ENCODE measurements at regions of chr11 and their contacts with region 1.

Region 1: DNA sequence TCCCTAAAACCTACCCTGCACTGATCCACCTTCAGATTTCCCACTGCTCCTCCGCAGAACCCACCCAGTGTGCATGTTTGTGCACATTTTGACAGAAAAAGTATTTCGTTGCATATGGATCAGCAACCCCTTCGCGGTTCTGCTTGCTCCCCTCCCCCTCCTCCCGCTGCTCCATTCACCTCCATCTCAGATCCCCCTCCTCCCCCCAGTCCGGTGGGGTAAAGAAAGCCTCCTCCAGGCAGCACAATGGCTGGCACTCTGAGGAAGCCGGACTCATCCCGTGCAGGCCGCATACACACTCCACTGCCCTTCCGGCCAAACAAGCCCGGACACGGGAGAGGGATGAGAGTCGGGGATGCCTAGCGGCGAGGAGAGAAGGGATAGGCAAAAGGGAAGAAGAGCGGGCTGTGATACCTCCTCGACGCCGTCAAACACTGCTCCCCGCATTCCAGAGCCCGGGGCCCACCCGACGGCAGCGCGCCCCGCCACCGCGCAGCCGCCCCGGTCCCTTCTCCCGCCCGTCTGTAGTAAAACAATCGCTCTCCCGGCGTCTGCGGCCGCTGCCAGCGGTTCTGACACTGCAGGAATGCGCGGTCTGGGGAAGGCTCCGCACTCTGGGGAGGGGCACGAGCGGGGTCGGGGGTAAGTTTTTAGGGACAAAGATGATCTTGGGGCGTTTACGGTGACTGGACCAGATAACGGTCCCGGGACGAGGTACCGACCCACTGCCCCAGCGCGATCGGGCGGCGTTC is 915 bp downstream of the FEZ1 start:
- DNase-seq: peak; percentile 55 to 81 (median 78)
- ATAC-seq: peak; percentile 79 to 81
- H3K4me3 ChIP-seq: peak overlapping the region; percentile 81
- H3K27ac ChIP-seq: peak overlapping the region; percentile 32
- H3K4me1 ChIP-seq: peaks cover 3% of the 10 kb centered on the region
- H3K27me3 ChIP-seq: no peaks in the 10 kb centered on the region

Region 2: GRCh38 chr11:125364121-125364826 is 130.9 kb before region 1 on chr11:
- intact Hi-C with region 1: no loop called
- DNase-seq: no peak
- ATAC-seq: no peak
- H3K4me3 ChIP-seq: no peak overlapping the region
- H3K27ac ChIP-seq: no peak overlapping the region
- H3K4me1 ChIP-seq: no peaks in the 10 kb centered on the region
- H3K27me3 ChIP-seq: no peaks in the 10 kb centered on the region

Region 3: DNA sequence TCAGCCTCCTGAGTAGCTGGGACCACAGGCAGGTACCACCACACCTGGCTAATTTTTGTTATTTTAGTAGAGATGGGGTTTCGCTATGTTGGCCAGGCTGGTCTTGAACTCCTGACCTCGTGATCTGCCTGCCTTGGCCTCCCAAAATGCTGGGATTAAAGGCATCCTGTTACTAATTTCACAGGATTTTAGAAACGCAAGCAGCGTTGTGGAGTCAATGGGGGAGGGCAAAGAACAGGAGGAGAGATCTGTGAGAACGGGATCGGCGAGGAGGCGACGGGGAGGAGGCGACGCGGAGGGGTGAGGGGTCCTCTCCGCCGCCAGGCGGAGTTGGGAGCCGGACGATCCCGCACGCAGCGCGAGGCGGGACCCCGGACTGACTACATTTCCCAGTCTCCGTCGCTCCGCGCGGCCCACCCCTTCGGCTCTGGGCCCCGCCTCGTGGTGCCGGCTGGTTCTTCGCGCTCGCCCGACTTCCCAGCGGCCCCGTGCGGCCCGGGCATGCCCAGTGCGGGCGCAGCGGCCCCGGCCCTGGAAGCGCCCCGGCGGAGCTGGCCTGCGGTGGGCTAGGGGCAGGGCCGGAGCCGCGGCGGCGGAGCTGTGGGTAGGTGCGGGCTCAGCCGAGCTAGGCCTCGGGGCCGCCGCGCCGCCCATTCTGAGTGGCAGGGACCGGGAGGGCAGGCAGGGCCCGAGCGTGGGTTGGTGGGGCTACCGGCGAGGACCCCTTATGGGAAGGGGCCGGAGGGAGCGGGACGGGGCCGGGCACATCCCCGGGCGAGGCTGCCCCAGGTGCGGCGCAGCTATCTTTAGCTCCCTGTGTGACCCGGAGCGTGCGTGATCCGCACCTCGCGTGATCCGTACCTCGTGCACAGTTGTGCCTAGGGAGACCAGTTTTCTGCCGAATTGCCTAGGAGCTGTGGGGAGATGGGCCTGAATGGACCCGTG is 74.1 kb after region 1 on chr11 and contains the start of gene EI24:
- intact Hi-C with region 1: loop called in 1 of 4 experiments (anchors 10 kb)
- DNase-seq: peak; percentile 94 to 98 (median 97)
- ATAC-seq: peak; percentile 100
- H3K4me3 ChIP-seq: peak within 1 kb of the TSS; percentile 88
- H3K27ac ChIP-seq: peak within 1 kb of the TSS; percentile 41
- H3K4me1 ChIP-seq: peaks cover 2% of the 10 kb centered on the region
- H3K27me3 ChIP-seq: no peaks in the 10 kb centered on the region
- total RNA-seq, gene EI24: 60.2 to 69.2 (median 64.0) TPM

Region 4: GRCh38 chr11:125625630-125626287 is 130.6 kb after region 1 on chr11:
- intact Hi-C with region 1: no loop called
- DNase-seq: peak; percentile 88 to 95 (median 95)
- ATAC-seq: peak; percentile 97 to 98
- H3K4me3 ChIP-seq: peak overlapping the region; percentile 50
- H3K27ac ChIP-seq: peak overlapping the region; percentile 77
- H3K4me1 ChIP-seq: peaks cover 5% of the 10 kb centered on the region
- H3K27me3 ChIP-seq: no peaks in the 10 kb centered on the region

Measured in right cardiac atrium (tissue), 5 donors.